Sigmoid colon (tissue), 7 donors: ENCODE measurements at regions of chr19 and their contacts with region 1.

Region 1: DNA sequence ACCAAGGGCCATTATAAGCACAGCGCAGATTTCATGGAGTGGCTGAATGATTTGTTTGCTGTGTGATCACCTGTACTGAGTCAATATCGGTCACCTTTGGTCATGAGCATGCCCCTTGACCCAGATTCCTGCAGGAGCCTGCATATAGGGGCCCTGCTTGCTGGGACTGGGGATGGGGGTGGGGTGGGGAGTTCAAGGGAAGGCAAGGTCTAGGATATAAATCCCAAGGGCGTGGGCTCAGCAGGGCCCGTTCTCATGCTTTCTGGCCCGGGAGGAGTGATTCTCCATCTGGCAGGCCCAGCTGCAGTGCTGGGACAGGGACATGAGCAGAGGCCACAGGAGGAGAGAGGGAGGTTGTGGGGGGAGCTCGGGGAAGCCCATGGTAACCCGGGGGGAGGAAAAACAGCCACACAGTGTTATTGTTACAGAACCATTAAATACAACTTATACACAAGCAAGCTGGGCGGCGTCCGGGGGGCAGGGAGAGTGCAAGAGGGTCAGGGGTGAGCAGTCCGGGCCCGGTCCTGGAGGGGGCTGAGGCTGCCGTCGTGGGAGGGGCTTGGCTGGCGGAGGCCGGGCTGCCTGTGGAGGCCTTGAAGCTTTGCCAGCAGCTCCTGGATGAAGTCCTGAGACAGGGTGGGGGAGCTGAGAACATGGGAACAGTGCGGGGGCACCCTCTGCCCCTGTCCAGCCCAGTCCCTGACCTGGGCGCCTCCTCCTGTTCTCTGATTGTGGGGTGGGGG is 5.2 kb downstream of the PPP1R14A start:
- DNase-seq: peak; percentile 89
- H3K4me3 ChIP-seq: peak overlapping the region; percentile 60 to 86 (median 67)
- H3K27ac ChIP-seq: peak overlapping the region; percentile 90 to 94 (median 92)
- H3K4me1 ChIP-seq: peaks cover 0 to 76% (median 68%) of the 10 kb centered on the region in 4 donors
- H3K27me3 ChIP-seq: no peaks in the 10 kb centered on the region
- CTCF ChIP-seq: no peak
- EP300 ChIP-seq: no peak
- POLR2A ChIP-seq: no peak

Region 2: DNA sequence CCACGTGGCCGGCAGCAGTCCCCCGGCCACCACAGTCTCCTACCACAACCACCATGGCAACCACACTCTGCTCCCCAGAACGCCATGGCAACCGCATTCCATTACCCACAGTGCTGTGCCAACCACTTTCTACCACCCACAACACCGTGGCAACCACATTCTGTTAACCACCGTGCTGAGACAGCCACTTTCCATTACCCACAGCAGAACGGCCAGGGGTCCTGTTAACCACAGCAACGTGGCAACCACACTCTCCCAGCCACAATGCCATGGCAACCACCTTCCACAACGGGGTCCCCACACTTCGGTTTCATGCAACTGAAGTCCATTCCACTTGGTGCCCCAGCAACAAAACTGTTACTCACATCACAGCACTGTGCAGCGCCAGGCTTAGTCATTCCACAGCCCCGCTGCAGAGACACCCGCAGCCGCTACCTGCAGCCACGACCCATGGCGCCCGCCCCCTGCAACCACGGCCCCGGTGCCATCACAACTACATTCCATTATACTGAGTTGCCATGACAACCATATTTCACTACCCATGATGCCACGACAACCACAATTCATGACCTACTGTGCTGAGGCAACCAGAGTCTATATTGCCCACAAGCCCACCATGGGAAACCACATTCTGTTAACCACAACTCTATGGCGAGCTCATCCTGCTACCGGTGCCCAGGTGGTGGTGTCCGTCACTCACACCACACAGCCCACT is 36.9 kb before region 1 on chr19:
- intact Hi-C with region 1: no loop called
- DNase-seq: no peak
- H3K4me3 ChIP-seq: no peak overlapping the region
- H3K27ac ChIP-seq: no peak overlapping the region
- H3K4me1 ChIP-seq: peaks cover 0 to 28% (median 24%) of the 10 kb centered on the region in 4 donors
- H3K27me3 ChIP-seq: peaks cover 27 to 85% (median 74%) of the 10 kb centered on the region in 3 donors
- CTCF ChIP-seq: no peak
- EP300 ChIP-seq: no peak
- POLR2A ChIP-seq: no peak

Region 3: DNA sequence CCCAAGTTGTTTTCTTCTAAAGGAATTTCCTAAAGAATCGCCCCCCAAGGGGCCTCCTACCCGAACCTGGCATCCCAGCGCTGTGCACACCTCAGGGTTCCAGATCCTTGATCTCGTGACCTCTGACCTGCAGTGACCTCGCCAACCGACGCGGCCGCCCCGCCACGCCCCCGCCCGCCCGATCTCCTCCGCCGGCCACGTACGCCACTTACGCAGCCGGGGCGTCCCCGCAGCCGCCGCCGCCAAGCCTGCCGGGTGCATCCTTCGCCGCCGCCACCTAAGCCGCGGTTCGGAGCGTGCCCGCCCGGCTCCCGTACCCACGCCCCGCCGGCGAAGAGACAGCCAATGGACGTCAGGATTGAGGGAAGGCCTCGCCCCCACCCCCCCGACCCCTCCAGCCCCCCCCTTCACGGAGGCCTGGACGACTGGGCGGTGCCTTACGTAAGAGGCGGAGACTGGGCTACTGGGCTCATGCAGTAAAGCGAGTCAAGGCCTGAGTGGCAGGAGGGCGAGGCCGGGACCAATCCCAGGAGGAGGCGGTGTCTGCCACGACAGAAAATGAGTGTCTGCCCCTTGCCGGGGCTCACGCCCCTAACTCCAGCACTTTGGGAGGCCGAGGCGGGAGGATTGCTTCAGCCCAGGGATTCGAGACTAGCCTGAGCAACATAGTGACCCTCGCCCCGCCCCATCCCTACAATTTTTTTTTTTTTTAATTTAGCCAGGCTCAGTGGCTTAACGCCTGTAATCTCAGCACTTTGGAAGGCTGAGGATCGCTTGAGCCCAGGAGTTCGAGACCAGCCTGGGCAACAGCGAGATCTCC is 64.9 kb after region 1 on chr19 and contains the start of gene YIF1B:
- intact Hi-C with region 1: loop called (anchors 1 kb)
- DNase-seq: peak; percentile 99
- H3K4me3 ChIP-seq: peak within 1 kb of the TSS; percentile 45 to 74 (median 62)
- H3K27ac ChIP-seq: peak within 1 kb of the TSS; percentile 81 to 98 (median 90)
- H3K4me1 ChIP-seq: peaks cover 0 to 45% (median 36%) of the 10 kb centered on the region in 4 donors
- H3K27me3 ChIP-seq: no peaks in the 10 kb centered on the region
- CTCF ChIP-seq: no peak
- EP300 ChIP-seq: peak in 1 of 4 donors; percentile 13
- POLR2A ChIP-seq: peak in 1 of 2 donors; percentile 21
- total RNA-seq, gene YIF1B: 12.5 to 22.5 (median 15.8) TPM

Region 4: DNA sequence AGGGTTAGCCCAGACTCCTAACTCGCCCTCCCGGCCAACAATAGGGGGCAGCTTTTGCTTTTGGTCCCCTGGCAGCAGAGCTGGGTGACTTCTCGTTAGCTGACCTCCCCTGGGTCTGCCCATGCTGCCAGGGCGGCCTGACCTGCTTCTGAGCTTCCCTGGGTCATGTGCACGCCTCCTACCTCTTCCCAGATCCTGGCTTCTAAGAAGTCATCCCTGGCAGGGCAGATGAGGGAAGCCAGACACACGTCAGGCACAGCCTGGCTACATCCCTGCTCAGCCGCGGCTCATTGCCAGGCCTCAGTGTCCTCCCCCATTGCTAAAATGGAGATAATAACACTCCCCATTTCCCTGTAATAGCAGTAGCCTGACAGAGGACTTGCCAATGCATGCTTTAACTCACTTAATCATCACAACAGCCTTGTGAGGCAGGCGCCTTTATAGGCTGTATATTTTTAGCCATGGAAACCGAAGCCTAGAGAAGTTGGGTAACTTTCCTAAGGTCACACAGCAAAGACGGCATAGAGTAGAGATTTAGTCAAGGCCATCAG is 70.7 kb after region 1 on chr19:
- intact Hi-C with region 1: loop called (anchors 1 kb)
- DNase-seq: peak; percentile 98
- H3K4me3 ChIP-seq: peak overlapping the region in 3 of 4 donors; percentile 63 to 96 (median 64)
- H3K27ac ChIP-seq: peak overlapping the region; percentile 78 to 98 (median 91)
- H3K4me1 ChIP-seq: peaks cover 0 to 54% (median 50%) of the 10 kb centered on the region in 4 donors
- H3K27me3 ChIP-seq: no peaks in the 10 kb centered on the region
- CTCF ChIP-seq: no peak
- EP300 ChIP-seq: peak; percentile 75 to 84 (median 81)
- POLR2A ChIP-seq: peak; percentile 71 to 74